ENCODE measurements at regions of chr3 and their contacts with region 1.

Region 1: DNA sequence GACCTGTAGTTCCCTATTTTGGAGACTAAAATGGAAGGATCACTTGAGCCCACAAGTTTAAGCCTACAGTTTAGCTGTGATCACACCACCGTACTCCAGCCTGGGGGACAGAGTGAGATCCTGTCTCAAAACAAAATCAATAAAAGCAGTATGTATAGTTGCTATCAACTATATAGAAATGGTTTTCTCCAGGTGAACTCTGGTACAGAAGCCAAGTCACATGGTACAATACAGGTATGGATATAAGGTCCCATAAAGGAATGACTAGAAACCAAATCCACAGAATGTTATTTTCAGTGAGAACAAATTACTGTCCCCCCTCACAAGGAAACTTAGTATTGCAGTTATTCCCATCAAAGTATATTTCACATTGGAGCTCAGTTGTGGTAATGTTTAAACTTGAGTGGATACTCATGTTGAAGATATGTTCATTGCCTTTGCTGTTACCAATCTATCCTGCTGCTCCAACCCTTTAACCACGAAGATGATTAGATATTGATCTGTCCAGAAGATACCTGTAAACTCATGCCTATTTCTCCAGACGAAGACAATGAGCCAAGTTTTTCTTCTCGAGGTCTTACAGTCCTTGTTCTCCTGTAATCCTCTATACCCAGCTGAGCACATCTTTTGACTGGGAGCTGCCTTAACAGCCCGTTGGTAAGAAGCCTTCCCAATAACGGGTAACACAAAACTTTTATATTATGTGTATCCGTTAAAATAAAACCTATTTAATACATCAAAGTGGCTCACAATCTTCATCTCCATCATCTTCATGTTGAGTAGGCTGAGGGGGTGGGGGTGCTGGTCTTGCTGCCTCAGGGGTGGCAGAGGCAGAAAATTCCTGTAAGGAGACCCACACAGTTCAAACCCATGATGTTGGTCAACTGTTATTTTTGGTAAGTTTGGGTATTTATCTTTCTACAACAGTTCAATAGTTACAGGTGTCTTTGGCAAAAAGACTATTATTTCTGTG is 24.6 kb downstream of the TRA2B start:
- DNase-seq: no peak
- ATAC-seq: peak; percentile 18
- H3K4me3 ChIP-seq: no peak overlapping the region
- H3K4me3 Mint-ChIP-seq: no peak overlapping the region
- H3K27ac ChIP-seq: no peak overlapping the region
- H3K27ac Mint-ChIP-seq: peak overlapping the region; percentile 13
- H3K4me1 ChIP-seq: no peaks in the 10 kb centered on the region
- H3K4me1 Mint-ChIP-seq: peaks cover 6% of the 10 kb centered on the region
- H3K27me3 ChIP-seq: no peaks in the 10 kb centered on the region
- H3K27me3 Mint-ChIP-seq: no peaks in the 10 kb centered on the region
- CTCF ChIP-seq: no peak

Region 2: DNA sequence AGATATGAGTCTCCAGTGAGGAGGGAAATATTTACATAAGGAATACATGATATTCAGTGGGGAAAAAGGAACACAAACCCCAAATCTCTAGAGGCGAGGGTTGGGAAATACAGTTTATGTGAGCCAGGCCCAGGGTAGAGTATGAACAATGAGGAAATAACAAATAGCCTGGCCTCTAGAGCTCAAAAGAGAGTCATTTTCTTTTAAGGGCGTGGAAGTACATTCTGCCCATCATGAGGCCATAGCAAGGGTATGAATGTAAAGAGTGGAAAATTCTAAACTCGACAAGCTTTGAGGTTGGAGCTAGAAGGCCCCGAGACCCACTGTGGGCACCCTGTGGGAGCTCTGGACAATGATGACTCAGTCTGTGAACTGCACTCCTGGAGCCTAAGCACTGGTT is 60.6 kb before region 1 on chr3:
- CTCF ChIA-PET with region 1: no interaction called
- POLR2A ChIA-PET with region 1: no interaction called
- intact Hi-C with region 1: no loop called
- DNase-seq: no peak
- ATAC-seq: no peak
- H3K4me3 ChIP-seq: no peak overlapping the region
- H3K4me3 Mint-ChIP-seq: no peak overlapping the region
- H3K27ac ChIP-seq: no peak overlapping the region
- H3K27ac Mint-ChIP-seq: no peak overlapping the region
- H3K4me1 ChIP-seq: no peaks in the 10 kb centered on the region
- H3K4me1 Mint-ChIP-seq: no peaks in the 10 kb centered on the region
- H3K27me3 ChIP-seq: no peaks in the 10 kb centered on the region
- H3K27me3 Mint-ChIP-seq: peaks cover 5% of the 10 kb centered on the region
- CTCF ChIP-seq: no peak

Region 3: DNA sequence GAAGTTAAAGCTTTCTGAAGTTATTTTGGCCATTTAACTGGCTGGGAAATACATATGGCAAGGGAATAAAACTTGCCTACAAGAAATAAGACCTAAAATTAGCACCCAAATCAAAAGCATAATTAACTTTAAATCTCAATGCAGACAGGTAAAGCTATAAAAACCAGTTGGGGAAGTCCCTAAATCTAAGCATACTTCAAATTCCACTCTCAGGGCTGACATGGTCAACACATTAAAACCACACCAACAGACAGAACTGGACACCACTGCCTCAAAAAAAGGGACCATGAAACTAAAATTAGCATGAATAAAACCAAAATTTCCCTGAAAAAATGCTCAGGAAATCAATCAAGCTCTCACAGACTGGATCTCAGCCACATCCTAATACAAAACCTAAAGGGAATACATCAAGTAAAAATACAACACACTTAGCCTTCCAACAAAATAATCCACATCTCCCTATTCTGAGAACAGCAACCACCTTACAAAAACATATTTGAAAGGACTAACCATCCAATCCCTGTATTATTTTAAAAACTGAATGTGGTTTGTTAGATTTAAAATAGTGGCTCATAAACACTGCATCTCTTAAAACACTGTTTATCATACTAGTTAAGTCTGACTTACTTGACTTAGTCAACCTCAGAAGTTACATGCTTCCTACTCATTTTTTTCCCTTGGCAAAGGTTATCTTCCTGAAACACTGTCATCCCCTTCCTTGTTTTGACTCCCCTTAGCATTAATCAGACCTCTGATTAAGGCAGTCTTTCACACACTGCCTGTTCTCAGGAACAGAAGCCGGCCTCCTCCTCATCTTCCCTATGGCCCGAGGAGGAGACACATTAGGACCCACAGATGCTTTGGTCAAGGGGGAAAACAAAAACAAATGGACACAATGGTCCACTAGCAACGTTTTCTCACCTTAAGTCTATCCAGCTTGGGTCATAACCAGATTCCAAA is 16.3 kb after region 1 on chr3:
- CTCF ChIA-PET with region 1: no interaction called
- POLR2A ChIA-PET with region 1: interaction called, 21 read pairs
- intact Hi-C with region 1: loop called in 1 of 2 experiments (anchors 2 kb)
- DNase-seq: no peak
- ATAC-seq: no peak
- H3K4me3 ChIP-seq: no peak overlapping the region
- H3K4me3 Mint-ChIP-seq: peak overlapping the region; percentile 100
- H3K27ac ChIP-seq: peak overlapping the region in 1 of 2 experiments; percentile 65
- H3K27ac Mint-ChIP-seq: peak overlapping the region; percentile 68
- H3K4me1 ChIP-seq: peaks cover 79% of the 10 kb centered on the region
- H3K4me1 Mint-ChIP-seq: peaks cover 97% of the 10 kb centered on the region
- H3K27me3 ChIP-seq: no peaks in the 10 kb centered on the region
- H3K27me3 Mint-ChIP-seq: no peaks in the 10 kb centered on the region
- CTCF ChIP-seq: no peak

Region 4: DNA sequence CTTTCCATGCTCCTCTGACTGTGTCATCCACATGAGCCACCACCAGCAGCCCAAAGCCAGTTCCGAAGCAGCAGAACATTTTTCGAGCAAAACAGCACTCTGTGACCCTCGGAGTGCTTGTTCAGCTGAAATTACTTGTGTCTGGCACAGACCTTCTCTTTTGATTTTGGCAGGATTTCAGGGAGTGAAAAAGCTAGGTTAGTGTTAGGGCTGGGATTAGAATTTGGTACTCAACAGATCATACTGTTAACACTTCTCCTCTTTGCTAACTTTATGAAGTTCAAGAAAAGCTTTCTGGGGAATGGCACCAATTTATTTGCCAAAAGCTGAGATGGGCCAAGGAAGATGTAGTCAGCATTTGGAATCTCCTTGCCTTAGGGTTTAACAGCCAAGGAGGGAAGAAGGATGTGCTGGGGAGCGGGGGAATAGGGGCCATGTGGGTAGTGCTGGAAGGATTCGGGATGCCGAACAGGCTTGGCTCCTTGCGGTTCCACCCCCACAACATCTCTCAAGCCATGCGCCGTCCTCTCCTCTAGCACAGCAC is 79.7 kb after region 1 on chr3:
- CTCF ChIA-PET with region 1: no interaction called
- POLR2A ChIA-PET with region 1: no interaction called
- intact Hi-C with region 1: loop called in 1 of 2 experiments (anchors 2 kb)
- DNase-seq: no peak
- ATAC-seq: no peak
- H3K4me3 ChIP-seq: no peak overlapping the region
- H3K4me3 Mint-ChIP-seq: no peak overlapping the region
- H3K27ac ChIP-seq: no peak overlapping the region
- H3K27ac Mint-ChIP-seq: no peak overlapping the region
- H3K4me1 ChIP-seq: no peaks in the 10 kb centered on the region
- H3K4me1 Mint-ChIP-seq: no peaks in the 10 kb centered on the region
- H3K27me3 ChIP-seq: no peaks in the 10 kb centered on the region
- H3K27me3 Mint-ChIP-seq: no peaks in the 10 kb centered on the region
- CTCF ChIP-seq: no peak

Measured in CD8-positive, alpha-beta T cell (primary cell).